ENCODE measurements at regions of chr14 and their contacts with region 1.

Region 1: GRCh38 chr14:56117765-56118610 is at the start of gene PELI2:
- DNase-seq: peak; percentile 77 to 91 (median 88)
- ATAC-seq: peak; percentile 90
- H3K4me3 ChIP-seq: peak within 1 kb of the TSS; percentile 83
- H3K4me3 Mint-ChIP-seq: peak within 1 kb of the TSS; percentile 84 to 97 (median 94)
- H3K27ac ChIP-seq: peak within 1 kb of the TSS; percentile 83
- H3K27ac Mint-ChIP-seq: peak within 1 kb of the TSS; percentile 82 to 99 (median 98)
- H3K4me1 ChIP-seq: peaks cover 14 to 32% of the 10 kb centered on the region in 2 donors
- H3K4me1 Mint-ChIP-seq: peaks cover 29 to 64% (median 57%) of the 10 kb centered on the region in 7 donors
- H3K27me3 ChIP-seq: peaks cover 0 to 4% of the 10 kb centered on the region in 2 donors
- H3K27me3 Mint-ChIP-seq: peaks cover 0 to 59% (median 0%) of the 10 kb centered on the region in 5 donors
- total RNA-seq, gene PELI2: 6.2 to 24.7 (median 11.5) TPM

Region 2: DNA sequence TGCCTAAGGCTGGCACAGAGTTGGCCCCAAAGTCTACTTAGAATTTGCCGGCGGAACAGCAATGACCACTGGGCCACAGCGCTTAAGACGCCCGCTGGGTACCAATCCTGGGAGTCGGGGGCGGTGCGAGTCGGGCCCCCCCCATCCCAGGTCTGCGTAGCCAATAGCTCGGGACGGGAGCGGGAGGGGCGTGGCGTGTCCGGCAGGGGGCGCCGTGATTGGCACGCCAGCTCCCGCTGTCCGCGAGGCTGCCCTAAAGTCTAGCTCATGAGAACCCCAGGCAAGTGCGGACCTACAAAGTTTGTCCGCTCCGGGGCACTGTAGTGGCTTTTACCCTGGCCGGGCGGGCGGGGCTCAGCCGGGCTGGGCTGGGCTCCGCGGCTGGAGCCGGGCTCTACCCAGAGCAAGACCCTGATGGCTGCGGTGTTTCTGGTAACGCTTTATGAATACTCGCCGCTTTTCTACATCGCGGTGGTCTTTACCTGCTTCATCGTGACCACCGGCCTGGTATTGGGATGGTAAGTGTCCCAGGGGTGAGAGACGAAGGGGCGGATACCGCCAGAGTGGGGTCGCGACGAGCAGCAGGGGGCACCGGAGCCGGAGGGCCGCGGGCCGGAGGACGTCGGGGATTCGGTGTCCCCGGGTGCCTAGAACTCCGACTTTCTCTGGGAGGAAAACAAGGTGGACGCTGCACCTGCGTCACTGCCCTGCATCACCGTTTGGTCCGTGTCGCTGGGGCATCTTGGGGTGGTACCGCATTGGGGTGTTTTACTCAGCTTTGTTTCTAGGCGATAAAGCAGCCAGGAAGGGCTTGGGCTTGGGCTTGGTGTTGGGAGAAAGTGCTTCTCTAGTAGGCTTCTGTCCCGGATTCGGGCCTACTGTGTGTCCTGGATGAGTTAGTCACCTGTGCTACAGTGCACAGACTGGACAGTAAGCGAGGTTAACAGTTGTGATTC is 1608.2 kb before region 1 on chr14 and contains the start of gene CGRRF1:
- CTCF ChIA-PET with region 1: no interaction called
- POLR2A ChIA-PET with region 1: interaction called, 3 read pairs
- intact Hi-C with region 1: loop called in 1 of 2 experiments (anchors 5 kb)
- DNase-seq: peak; percentile 86 to 98 (median 89)
- ATAC-seq: peak; percentile 99
- H3K4me3 ChIP-seq: peak within 1 kb of the TSS; percentile 93
- H3K4me3 Mint-ChIP-seq: peak within 1 kb of the TSS; percentile 87 to 99 (median 96)
- H3K27ac ChIP-seq: peak within 1 kb of the TSS; percentile 72
- H3K27ac Mint-ChIP-seq: peak within 1 kb of the TSS; percentile 85 to 93 (median 89)
- H3K4me1 ChIP-seq: peaks cover 11% of the 10 kb centered on the region in 2 donors
- H3K4me1 Mint-ChIP-seq: peaks cover 20 to 56% (median 53%) of the 10 kb centered on the region in 7 donors
- H3K27me3 ChIP-seq: no peaks in the 10 kb centered on the region
- H3K27me3 Mint-ChIP-seq: peaks cover 0 to 10% (median 0%) of the 10 kb centered on the region in 5 donors
- total RNA-seq, gene CGRRF1: 11.2 to 24.1 (median 17.3) TPM

Region 3: DNA sequence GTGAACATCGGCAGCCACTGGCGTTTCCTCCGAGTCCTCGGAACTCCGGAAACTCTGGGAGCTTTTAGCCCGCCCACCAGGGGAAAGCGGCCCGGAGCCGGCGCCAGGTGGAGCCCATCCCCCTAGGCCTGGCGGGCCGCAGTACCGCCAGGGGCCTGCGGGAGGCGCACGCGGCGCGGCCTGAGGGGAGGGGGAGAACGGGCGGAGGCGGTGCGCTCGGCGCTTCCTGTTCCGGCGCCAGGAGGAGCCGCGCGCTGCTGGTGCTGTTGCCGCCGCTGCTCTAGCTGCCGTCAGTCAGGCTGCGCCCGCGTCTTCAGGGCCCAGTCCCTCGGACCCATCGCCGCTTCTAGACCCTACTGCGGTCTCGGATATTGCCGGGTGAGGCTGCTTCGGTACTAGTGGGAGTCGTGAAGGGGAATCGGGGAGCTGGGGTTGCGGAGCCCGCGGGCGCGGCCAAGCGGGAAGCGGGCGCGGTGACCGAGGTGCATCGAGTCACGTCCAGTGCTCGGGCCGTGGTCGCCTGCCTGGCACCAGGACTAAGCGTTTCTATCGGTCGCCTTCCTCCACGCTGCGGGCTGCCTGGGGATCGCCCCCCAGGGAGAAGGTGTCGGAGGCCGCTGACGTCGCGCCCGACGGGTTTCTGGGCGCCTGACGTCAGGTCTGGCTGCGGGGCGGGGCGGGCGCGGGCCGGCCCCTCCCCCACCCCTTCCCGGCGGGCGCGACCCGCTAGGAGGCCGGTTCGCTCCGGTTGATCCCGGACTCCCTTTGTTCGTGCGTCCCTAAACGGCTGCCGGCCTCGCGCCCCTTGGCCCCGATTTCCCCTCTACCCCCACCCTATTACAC is 1066.3 kb before region 1 on chr14 and contains the start of gene MAPK1IP1L:
- CTCF ChIA-PET with region 1: no interaction called
- POLR2A ChIA-PET with region 1: no interaction called
- intact Hi-C with region 1: loop called in 1 of 2 experiments (anchors 5 kb)
- DNase-seq: peak; percentile 86 to 99 (median 92)
- ATAC-seq: peak; percentile 97
- H3K4me3 ChIP-seq: peak within 1 kb of the TSS; percentile 93
- H3K4me3 Mint-ChIP-seq: peak within 1 kb of the TSS; percentile 88 to 94 (median 92)
- H3K27ac ChIP-seq: peak within 1 kb of the TSS; percentile 100
- H3K27ac Mint-ChIP-seq: peak within 1 kb of the TSS; percentile 87 to 97 (median 96)
- H3K4me1 ChIP-seq: peaks cover 26 to 32% of the 10 kb centered on the region in 2 donors
- H3K4me1 Mint-ChIP-seq: peaks cover 17 to 54% (median 39%) of the 10 kb centered on the region in 7 donors
- H3K27me3 ChIP-seq: no peaks in the 10 kb centered on the region
- H3K27me3 Mint-ChIP-seq: no peaks in the 10 kb centered on the region
- total RNA-seq, gene MAPK1IP1L: 65.1 to 143 (median 111) TPM

Region 4: GRCh38 chr14:55579724-55580469 is 538.1 kb before region 1 on chr14 and contains the start of gene KTN1:
- CTCF ChIA-PET with region 1: no interaction called
- POLR2A ChIA-PET with region 1: no interaction called
- intact Hi-C with region 1: loop called in 1 of 2 experiments (anchors 1 kb)
- DNase-seq: peak; percentile 77 to 90 (median 88)
- ATAC-seq: peak; percentile 94
- H3K4me3 ChIP-seq: peak within 1 kb of the TSS; percentile 93
- H3K4me3 Mint-ChIP-seq: peak within 1 kb of the TSS; percentile 93 to 98 (median 95)
- H3K27ac ChIP-seq: peak within 1 kb of the TSS; percentile 86
- H3K27ac Mint-ChIP-seq: peak within 1 kb of the TSS; percentile 90 to 97 (median 93)
- H3K4me1 ChIP-seq: peaks cover 20 to 34% of the 10 kb centered on the region in 2 donors
- H3K4me1 Mint-ChIP-seq: peaks cover 20 to 28% (median 27%) of the 10 kb centered on the region in 7 donors
- H3K27me3 ChIP-seq: no peaks in the 10 kb centered on the region
- H3K27me3 Mint-ChIP-seq: no peaks in the 10 kb centered on the region
- total RNA-seq, gene KTN1: 87.3 to 131 (median 105) TPM

Region 5: DNA sequence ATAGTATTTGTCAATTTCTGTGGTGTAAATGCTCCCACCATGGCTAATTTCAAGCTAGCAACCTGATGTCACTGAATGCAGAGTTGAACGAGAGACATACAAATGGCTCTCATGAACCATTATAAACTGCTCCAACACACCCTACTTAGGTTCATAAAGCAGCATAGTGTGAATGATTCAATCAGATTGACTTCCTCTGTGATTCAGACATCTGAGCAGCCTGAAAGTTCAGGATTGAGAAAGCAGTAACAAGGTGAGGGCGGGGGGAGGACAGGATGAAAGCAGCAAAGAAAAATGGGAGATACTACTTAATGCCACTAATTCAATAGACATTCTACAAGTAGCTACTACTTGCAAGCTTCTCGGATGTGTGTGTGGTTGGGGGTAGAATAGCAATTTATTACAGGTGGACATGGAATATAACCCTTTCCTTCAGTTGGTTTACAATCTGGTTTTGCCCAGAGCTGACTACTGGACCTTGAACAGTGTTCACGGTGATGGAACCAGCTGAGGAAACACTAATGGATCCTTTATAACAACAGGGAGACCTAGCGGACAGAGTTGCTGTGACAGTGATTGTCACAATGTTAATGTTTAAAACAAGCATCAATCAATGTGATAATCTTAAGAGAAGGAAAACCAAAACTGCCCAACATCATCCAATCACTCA is 52.2 kb before region 1 on chr14:
- CTCF ChIA-PET with region 1: no interaction called
- POLR2A ChIA-PET with region 1: no interaction called
- intact Hi-C with region 1: loop called in 1 of 2 experiments (anchors 5 kb)
- DNase-seq: no peak
- ATAC-seq: no peak
- H3K4me3 ChIP-seq: no peak overlapping the region
- H3K4me3 Mint-ChIP-seq: no peak overlapping the region
- H3K27ac ChIP-seq: no peak overlapping the region
- H3K27ac Mint-ChIP-seq: no peak overlapping the region
- H3K4me1 ChIP-seq: no peaks in the 10 kb centered on the region
- H3K4me1 Mint-ChIP-seq: peaks cover 0 to 1% (median 0%) of the 10 kb centered on the region in 7 donors
- H3K27me3 ChIP-seq: no peaks in the 10 kb centered on the region
- H3K27me3 Mint-ChIP-seq: peaks cover 4 to 5% (median 4%) of the 10 kb centered on the region in 5 donors

Region 6: GRCh38 chr14:56579345-56580220 is 461.6 kb after region 1 on chr14 and contains the start of gene TMEM260:
- CTCF ChIA-PET with region 1: no interaction called
- POLR2A ChIA-PET with region 1: interaction called, 8 read pairs
- intact Hi-C with region 1: loop called (anchors 2 to 5 kb)
- DNase-seq: peak; percentile 83 to 95 (median 92)
- ATAC-seq: peak; percentile 98
- H3K4me3 ChIP-seq: peak within 1 kb of the TSS; percentile 83
- H3K4me3 Mint-ChIP-seq: peak within 1 kb of the TSS; percentile 87 to 97 (median 95)
- H3K27ac ChIP-seq: peak within 1 kb of the TSS; percentile 88
- H3K27ac Mint-ChIP-seq: peak within 1 kb of the TSS; percentile 90 to 98 (median 96)
- H3K4me1 ChIP-seq: peaks cover 19 to 22% of the 10 kb centered on the region in 2 donors
- H3K4me1 Mint-ChIP-seq: peaks cover 33 to 45% (median 42%) of the 10 kb centered on the region in 7 donors
- H3K27me3 ChIP-seq: no peaks in the 10 kb centered on the region
- H3K27me3 Mint-ChIP-seq: no peaks in the 10 kb centered on the region
- total RNA-seq, gene TMEM260: 20.8 to 39.0 (median 27.4) TPM